SK-N-SH (cell line): ENCODE measurements at regions of chr3 and their contacts with region 1.

Region 1: DNA sequence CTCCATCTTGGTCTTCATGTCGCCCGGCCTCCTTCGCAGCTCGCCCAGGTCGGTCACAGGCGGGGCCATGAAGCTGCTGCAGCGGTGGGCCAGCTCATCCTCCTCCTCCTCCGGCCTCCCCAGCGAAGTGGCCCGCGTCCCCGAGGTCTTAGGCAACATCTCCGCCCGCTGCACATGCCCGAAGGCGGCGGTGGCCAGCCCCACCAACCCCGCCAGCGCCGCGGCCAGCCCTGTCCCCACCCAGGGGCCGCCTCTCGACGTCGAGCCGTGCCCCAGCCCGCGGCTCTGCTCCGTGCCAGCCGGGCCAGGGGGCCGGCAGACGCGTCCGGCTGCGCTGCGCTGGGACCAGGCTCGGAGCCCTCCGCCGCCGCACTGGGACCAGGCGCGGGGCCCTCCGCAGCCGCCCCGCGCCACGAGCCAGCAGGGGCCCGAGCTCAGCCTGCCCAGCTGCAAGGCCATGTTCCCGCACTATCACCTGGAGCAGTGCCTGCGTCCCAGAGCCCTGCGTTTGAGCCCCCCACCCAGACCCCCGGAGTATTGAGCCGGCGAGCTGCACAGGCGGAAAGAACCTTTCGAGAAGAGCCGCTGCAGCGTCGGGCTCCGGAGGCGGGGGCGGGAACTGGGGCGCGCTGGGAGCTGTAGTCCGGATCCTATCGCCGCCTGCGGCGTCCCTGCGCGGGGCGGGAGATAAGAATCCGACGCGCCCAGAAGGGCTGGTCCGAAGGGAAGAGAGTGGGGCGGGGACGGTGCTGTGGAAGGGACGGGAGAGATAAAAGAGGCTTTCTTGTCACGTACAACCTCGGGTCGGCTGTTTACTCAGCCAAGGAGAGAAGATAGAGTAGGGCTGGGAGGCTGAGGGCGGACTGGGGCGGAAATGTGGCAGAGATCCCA is at the start of gene CPOX:
- DNase-seq: peak; percentile 91
- H3K4me3 ChIP-seq: peak within 1 kb of the TSS; percentile 71 to 87
- H3K27ac ChIP-seq: peak within 1 kb of the TSS; percentile 66 to 80
- H3K4me1 ChIP-seq: peaks cover 3 to 10% of the 10 kb centered on the region in 2 experiments; a peak in 3 of 4 replicates
- H3K27me3 ChIP-seq: no peaks in the 10 kb centered on the region
- CTCF ChIP-seq: no peak
- EP300 ChIP-seq: peak in 1 of 2 experiments; percentile 32; a peak in 2 of 4 replicates
- RAD21 ChIP-seq: no peak
- polyA plus RNA-seq, gene CPOX: 36.7 and 37.2 TPM in 2 replicates

Region 2: DNA sequence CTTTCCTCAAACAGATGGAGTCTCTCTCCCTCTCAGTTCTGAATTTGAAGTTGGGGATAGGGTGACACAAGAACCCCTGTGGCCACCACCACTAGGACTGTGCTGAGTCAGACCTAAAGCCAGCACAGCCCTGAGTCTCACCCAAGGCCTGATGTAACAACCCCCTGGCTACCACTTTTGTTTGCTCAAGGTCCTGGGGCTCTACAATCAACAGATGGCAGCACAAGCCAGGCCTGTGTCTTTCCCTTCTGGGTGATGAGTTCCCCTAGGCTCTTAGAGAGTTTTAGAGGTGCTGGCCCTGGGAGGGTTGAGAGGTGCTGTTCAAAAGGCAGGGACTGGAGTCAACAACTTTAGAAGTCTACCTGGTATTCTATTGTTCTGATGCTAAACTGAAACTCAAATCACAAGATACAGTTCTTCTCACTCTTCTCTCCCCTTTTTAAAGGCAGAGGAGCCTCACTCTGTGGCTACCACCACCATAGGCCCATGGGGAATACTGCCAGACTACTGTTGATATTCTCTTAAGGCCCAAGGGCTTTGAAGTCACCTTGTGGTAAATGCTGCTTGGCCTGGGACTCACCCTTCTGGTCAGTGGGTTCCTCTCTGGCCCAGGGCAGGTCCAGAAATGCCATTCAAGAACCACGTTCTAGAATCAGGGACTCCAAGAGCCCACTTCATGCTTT is 233.2 kb before region 1 on chr3:
- CTCF ChIA-PET with region 1: no interaction called
- POLR2A ChIA-PET with region 1: no interaction called
- DNase-seq: no peak
- H3K4me3 ChIP-seq: no peak overlapping the region
- H3K27ac ChIP-seq: no peak overlapping the region
- H3K4me1 ChIP-seq: no peaks in the 10 kb centered on the region
- H3K27me3 ChIP-seq: no peaks in the 10 kb centered on the region
- CTCF ChIP-seq: no peak
- EP300 ChIP-seq: no peak
- RAD21 ChIP-seq: no peak

Region 3: DNA sequence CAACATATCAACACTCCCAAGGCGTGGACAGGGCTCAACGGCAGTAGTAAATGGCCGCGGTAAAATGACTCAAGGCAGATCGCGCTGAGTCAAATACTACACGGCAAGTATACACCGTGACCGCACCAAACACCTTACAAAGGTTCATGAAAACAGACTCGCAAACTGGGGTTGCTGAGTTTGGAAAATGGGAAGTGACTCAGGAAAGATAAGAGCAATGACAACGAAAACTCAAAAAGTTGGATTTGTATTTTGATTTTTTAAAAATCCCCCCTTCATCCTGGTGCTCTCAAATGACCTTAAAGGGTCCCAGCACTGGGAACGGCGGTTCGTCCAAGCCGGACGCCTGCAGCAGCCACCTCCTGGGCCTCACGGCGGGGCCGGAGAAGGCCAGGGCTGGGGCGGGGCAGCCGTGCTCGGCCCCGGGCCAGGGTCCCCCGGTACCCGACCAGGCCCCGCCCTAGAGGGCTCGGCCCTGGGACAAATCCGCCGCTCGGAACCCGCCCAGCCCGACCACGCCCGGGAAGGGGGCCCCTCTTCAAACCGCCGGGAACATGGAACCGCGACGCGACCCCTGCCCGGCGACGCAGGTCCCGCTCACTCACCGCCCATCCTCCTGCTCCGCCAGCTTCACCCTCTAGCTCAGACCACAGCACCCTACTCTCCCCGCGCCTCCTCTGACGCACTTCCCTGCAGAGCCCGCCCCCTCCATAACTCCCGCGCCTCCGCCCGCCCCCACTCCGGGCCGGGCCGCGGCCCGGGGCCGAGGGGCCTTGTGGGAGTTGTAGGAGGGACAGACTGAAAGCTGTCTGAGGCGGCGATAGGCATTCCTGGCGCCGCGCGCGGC is 70.8 kb before region 1 on chr3 and contains the start of gene CLDND1:
- CTCF ChIA-PET with region 1: interaction called, 3 read pairs
- POLR2A ChIA-PET with region 1: interaction called, 10 read pairs
- DNase-seq: peak; percentile 98
- H3K4me3 ChIP-seq: peak within 1 kb of the TSS; percentile 84
- H3K27ac ChIP-seq: peak within 1 kb of the TSS; percentile 79 to 90
- H3K4me1 ChIP-seq: peaks cover 0 to 7% of the 10 kb centered on the region in 2 experiments; a peak in 2 of 4 replicates
- H3K27me3 ChIP-seq: no peaks in the 10 kb centered on the region
- CTCF ChIP-seq: no peak
- EP300 ChIP-seq: no peak
- RAD21 ChIP-seq: no peak
- polyA plus RNA-seq, gene CLDND1: 110 and 165 TPM in 2 replicates

Region 4: GRCh38 chr3:98732286-98733052 is 139.2 kb after region 1 on chr3:
- CTCF ChIA-PET with region 1: interaction called, 4 read pairs
- POLR2A ChIA-PET with region 1: interaction called, 17 read pairs
- DNase-seq: peak; percentile 79
- H3K4me3 ChIP-seq: peak overlapping the region; percentile 84 to 86
- H3K27ac ChIP-seq: peak overlapping the region; percentile 60 to 98
- H3K4me1 ChIP-seq: peaks cover 5 to 28% of the 10 kb centered on the region in 2 experiments; a peak in 3 of 4 replicates
- H3K27me3 ChIP-seq: no peaks in the 10 kb centered on the region
- CTCF ChIP-seq: no peak
- EP300 ChIP-seq: no peak
- RAD21 ChIP-seq: no peak

Region 5: DNA sequence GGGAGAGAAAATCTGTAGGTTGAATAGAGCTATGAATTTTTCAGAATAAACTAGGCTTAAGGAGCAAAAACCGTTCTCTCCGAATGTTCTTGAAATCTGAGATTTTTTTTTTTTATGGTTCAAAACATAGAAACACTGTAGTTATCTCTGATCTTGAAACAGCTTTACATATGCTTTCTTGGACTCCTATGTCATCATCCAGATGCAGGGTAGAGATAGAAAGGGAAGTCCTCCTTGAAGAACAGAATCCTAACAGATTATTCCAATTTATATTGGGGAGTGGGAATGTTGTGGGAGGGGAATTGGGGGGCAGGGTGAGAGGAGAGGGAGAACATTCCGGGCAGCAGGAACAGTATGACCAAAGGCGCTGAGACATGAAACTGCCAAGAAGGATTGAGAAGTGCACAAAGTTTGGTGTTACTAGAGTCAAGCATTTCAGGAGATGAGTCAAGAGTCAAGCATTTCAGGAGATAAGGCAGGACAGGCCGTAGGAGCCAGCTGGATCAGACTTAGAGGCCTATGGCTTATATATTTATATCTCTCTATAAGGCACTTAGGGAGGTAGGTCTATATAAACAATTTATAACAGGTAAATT is 147.9 kb after region 1 on chr3:
- CTCF ChIA-PET with region 1: interaction called, 10 read pairs
- POLR2A ChIA-PET with region 1: no interaction called
- DNase-seq: no peak
- H3K4me3 ChIP-seq: no peak overlapping the region
- H3K27ac ChIP-seq: peak overlapping the region; percentile 7 to 12; a peak in 2 of 4 replicates
- H3K4me1 ChIP-seq: peaks cover 7 to 25% of the 10 kb centered on the region in 2 experiments; a peak in 3 of 4 replicates
- H3K27me3 ChIP-seq: no peaks in the 10 kb centered on the region
- CTCF ChIP-seq: no peak
- EP300 ChIP-seq: no peak
- RAD21 ChIP-seq: no peak

Region 6: DNA sequence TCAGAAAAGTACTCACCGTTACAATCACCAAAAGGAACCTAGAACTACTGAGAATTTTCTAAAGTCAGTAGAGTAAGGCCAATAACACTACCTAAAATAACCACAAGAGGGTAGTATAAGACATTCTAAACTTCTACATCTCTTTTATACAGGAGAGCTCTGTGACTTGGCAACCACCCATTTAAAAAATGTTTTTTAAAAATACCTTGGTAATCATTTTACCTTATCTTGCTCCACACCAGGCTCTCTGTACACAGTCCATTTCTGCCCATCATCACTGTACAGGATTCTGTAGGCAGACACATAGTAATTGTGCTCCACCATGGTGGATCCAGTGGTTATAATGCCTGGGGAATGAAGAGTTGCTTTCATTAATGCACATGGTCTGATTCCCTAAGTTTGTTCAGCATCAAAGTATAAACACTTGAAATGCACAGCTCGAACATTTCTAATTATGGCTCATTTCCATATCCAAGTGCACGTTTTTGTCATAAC is 224.3 kb after region 1 on chr3:
- CTCF ChIA-PET with region 1: interaction called, 60 read pairs
- POLR2A ChIA-PET with region 1: no interaction called
- DNase-seq: peak; percentile 39
- H3K4me3 ChIP-seq: no peak overlapping the region
- H3K27ac ChIP-seq: peak overlapping the region; percentile 40 to 59
- H3K4me1 ChIP-seq: peaks cover 10 to 22% of the 10 kb centered on the region in 2 experiments
- H3K27me3 ChIP-seq: no peaks in the 10 kb centered on the region
- CTCF ChIP-seq: peak; percentile 69
- EP300 ChIP-seq: no peak
- RAD21 ChIP-seq: peak; percentile 81

Region 7: GRCh38 chr3:98994128-98994762 is 401.0 kb after region 1 on chr3:
- CTCF ChIA-PET with region 1: interaction called, 34 read pairs
- POLR2A ChIA-PET with region 1: no interaction called
- DNase-seq: peak; percentile 24
- H3K4me3 ChIP-seq: no peak overlapping the region
- H3K27ac ChIP-seq: peak overlapping the region in 1 of 2 experiments; percentile 5; a peak in 1 of 4 replicates
- H3K4me1 ChIP-seq: no peaks in the 10 kb centered on the region; a peak in 1 of 4 replicates
- H3K27me3 ChIP-seq: no peaks in the 10 kb centered on the region
- CTCF ChIP-seq: peak; percentile 85
- EP300 ChIP-seq: no peak
- RAD21 ChIP-seq: peak; percentile 96